ENCODE measurements at regions of chr5 and their contacts with region 1.

Region 1: DNA sequence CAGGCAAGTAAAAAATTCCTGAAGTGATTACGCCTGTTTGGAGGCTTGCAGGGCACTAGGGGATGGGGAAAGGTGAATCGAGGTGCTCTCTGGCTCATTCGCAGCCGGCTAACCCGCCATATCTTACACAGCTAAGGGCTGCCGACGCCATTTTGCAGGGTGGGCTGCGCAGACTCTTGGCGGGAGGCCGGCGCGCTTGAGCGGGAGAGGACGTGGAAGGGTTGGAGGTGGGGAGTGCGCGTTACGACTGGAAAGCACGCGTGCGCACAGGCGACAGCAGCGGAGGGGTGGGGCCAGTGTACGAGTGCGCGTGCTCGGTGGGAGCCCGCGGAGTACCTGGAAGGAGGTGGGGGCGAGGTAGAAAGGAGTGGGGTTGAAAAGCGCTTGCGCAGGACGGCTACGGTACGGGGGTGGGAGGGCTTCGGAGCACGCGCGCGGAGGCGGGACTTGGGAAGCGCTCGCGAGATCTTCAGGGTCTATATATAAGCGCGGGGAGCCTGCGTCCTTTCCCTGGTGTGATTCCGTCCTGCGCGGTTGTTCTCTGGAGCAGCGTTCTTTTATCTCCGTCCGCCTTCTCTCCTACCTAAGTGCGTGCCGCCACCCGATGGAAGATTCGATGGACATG is at the start of gene NPM1:
- DNase-seq: peak; percentile 98
- H3K4me3 Mint-ChIP-seq: peak within 1 kb of the TSS; percentile 93
- H3K27ac Mint-ChIP-seq: peak within 1 kb of the TSS; percentile 96
- H3K4me1 Mint-ChIP-seq: peaks cover 39% of the 10 kb centered on the region
- H3K27me3 Mint-ChIP-seq: peaks cover 3% of the 10 kb centered on the region
- total RNA-seq, gene NPM1: 2,483 to 2,592 TPM

Region 2: DNA sequence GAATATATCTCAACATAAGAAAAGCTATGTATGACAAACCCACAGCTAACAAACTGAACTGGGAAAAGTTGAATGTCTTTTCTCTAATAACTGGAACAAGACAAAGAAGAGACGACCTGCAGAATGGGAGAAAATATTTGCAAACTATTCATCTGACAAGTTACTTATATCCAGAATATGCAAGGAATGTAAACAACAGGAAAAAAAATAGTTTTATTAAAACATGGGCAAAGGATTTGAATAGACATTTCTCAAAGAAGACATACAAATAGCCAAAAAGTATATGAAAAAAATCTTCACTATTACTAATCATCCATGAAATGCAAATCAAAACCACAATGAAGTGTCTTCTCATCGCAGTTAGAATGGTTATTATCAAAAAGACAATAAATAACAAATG is 260.1 kb before region 1 on chr5:
- CTCF ChIA-PET with region 1: no interaction called
- POLR2A ChIA-PET with region 1: no interaction called
- intact Hi-C with region 1: no loop called
- DNase-seq: no peak
- H3K4me3 Mint-ChIP-seq: no peak overlapping the region
- H3K27ac Mint-ChIP-seq: no peak overlapping the region
- H3K4me1 Mint-ChIP-seq: no peaks in the 10 kb centered on the region
- H3K27me3 Mint-ChIP-seq: peaks cover 2% of the 10 kb centered on the region

Region 3: GRCh38 chr5:171355302-171355724 is 32.1 kb before region 1 on chr5:
- CTCF ChIA-PET with region 1: no interaction called
- POLR2A ChIA-PET with region 1: no interaction called
- intact Hi-C with region 1: loop called (anchors 2 kb)
- DNase-seq: peak; percentile 67
- H3K4me3 Mint-ChIP-seq: no peak overlapping the region
- H3K27ac Mint-ChIP-seq: peak overlapping the region; percentile 13
- H3K4me1 Mint-ChIP-seq: peaks cover 4% of the 10 kb centered on the region
- H3K27me3 Mint-ChIP-seq: peaks cover 2% of the 10 kb centered on the region

Region 4: GRCh38 chr5:172283020-172283861 is 895.8 kb after region 1 on chr5 and contains the start of gene UBTD2:
- CTCF ChIA-PET with region 1: no interaction called
- POLR2A ChIA-PET with region 1: no interaction called
- intact Hi-C with region 1: loop called (anchors 5 kb)
- DNase-seq: peak; percentile 83
- H3K4me3 Mint-ChIP-seq: peak within 1 kb of the TSS; percentile 79
- H3K27ac Mint-ChIP-seq: no peak within 1 kb of the TSS
- H3K4me1 Mint-ChIP-seq: peaks cover 26% of the 10 kb centered on the region
- H3K27me3 Mint-ChIP-seq: no peaks in the 10 kb centered on the region
- total RNA-seq, gene UBTD2: 4.6 to 4.9 TPM

Measured in activated CD4-positive, alpha-beta memory T cell treated with anti-CD3 and anti-CD28 coated beads for 36 hours (primary cell).